Cardiac septum (tissue), 1 donor: ENCODE measurements at regions of chr4 and their contacts with region 1.

Region 1: GRCh38 chr4:64407000-64407399 is 2.2 kb downstream of the TECRL start:
- DNase-seq: no peak

Region 2: GRCh38 chr4:64489628-64490027 is 82.6 kb after region 1 on chr4:
- intact Hi-C with region 1: loop called (anchors 2 kb)
- DNase-seq: no peak

Region 3: DNA sequence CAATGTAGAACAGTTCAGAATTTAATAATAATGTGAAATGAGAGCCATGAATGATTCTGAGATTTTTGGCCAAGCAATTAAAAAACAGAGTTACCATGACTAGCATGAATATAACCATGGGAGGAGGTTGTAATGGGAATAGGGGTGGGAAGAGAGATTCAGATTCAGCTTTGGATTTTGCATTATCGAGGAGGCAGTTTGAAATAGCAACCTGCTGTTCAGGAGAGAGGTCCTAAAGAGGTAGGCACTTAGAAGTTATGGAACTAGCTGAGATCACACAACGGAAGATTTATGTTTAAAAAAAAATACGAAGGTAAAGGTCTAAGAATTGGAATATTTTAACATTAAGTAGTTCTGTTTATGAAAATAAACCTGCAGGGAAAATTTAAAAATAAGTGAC is 126.6 kb after region 1 on chr4:
- intact Hi-C with region 1: loop called (anchors 5 kb)
- DNase-seq: no peak